ENCODE measurements at regions of chr12 and their contacts with region 1.

Region 1: GRCh38 chr12:1795785-1796514 is 24.4 kb upstream of the LRTM2 start:
- DNase-seq: peak; percentile 93
- H3K4me3 Mint-ChIP-seq: peak overlapping the region; percentile 87
- H3K27ac Mint-ChIP-seq: peak overlapping the region; percentile 89
- H3K4me1 Mint-ChIP-seq: peaks cover 18% of the 10 kb centered on the region
- H3K27me3 Mint-ChIP-seq: no peaks in the 10 kb centered on the region

Region 2: GRCh38 chr12:401235-402028 is 1394.5 kb before region 1 on chr12 and contains the start of gene CCDC77:
- intact Hi-C with region 1: loop called (anchors 5 kb)
- DNase-seq: peak; percentile 93
- H3K4me3 Mint-ChIP-seq: no peak within 1 kb of the TSS
- H3K27ac Mint-ChIP-seq: no peak within 1 kb of the TSS
- H3K4me1 Mint-ChIP-seq: no peaks in the 10 kb centered on the region
- H3K27me3 Mint-ChIP-seq: no peaks in the 10 kb centered on the region
- total RNA-seq, gene CCDC77: 12.6 and 14.6 TPM in 2 replicates

Region 3: DNA sequence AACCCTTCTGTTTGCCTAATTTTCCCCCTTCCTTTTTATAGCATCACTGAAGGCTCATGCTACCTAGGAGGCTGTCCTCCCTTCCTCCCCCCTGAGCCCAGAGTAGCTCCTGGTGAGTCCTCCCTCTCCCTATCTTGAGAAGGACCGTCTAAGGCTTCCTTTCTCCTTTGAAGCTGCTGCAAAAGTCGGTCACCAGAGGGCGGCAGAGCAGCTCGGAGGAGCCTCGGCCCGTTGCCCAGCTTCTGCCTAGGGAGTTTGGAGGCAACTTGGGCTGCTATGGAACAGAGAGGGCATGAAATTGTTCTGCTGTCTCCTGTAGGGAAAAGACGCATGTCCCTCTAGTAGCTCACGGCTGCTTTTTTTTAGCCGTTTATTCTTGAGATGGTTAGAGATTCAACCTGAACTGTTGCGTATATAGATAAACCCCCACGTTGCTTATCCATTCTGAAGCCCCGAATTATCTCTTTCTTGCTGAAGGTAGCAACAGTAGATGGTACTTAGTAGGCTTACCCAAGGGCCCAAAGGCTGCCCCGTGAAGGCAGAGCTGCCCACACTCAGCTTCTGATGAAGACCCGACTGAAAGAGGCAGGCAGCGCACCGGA is 161.3 kb before region 1 on chr12:
- intact Hi-C with region 1: loop called (anchors 1 kb)
- DNase-seq: peak; percentile 30
- H3K4me3 Mint-ChIP-seq: no peak overlapping the region
- H3K27ac Mint-ChIP-seq: no peak overlapping the region
- H3K4me1 Mint-ChIP-seq: peaks cover 8% of the 10 kb centered on the region
- H3K27me3 Mint-ChIP-seq: peaks cover 40% of the 10 kb centered on the region

Region 4: GRCh38 chr12:1939801-1940607 is 144.1 kb after region 1 on chr12:
- intact Hi-C with region 1: loop called (anchors 1 kb)
- DNase-seq: peak; percentile 74
- H3K4me3 Mint-ChIP-seq: no peak overlapping the region
- H3K27ac Mint-ChIP-seq: no peak overlapping the region
- H3K4me1 Mint-ChIP-seq: peaks cover 6% of the 10 kb centered on the region
- H3K27me3 Mint-ChIP-seq: no peaks in the 10 kb centered on the region

Region 5: DNA sequence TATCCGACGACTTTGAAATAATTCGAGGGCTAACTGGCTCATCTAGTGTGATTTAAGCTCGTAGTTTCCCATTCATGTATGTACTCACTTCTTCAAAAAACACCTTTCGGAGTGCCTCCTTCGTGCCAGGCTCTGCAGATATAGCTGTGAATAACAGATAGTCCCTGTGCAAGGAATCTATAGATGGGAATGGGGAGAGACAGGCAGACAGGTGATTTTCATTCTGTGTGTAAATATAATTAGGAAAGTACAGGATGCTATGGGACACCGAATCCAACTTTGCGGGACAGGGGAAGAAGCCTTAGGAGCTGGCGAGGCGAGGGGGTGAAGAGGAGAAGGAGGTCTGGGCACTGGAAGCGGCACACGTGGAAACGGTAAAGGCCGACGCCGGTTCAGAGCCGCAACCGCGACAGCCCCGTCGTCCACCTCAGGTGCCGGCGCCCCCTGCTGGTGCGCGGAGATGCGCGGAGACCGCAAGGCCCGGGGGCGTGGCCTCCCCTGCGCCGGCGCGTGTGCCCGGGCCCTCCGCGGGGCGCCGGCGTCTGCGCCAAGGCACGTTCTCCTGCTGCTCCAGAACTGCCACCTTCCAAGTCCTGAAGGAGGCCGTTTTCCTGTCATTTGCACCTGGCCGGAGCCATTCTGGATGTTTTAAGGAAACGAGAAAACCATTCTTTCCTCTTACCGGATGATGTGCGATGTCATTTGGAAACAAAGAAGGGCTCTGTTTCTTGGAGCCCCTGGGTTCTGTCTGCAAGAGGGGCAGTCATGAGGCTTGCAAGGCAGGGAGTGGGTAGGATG is 238.9 kb after region 1 on chr12:
- intact Hi-C with region 1: loop called (anchors 1 kb)
- DNase-seq: peak; percentile 78
- H3K4me3 Mint-ChIP-seq: peak overlapping the region; percentile 53
- H3K27ac Mint-ChIP-seq: no peak overlapping the region
- H3K4me1 Mint-ChIP-seq: peaks cover 14% of the 10 kb centered on the region
- H3K27me3 Mint-ChIP-seq: peaks cover 52% of the 10 kb centered on the region

Measured in activated T-helper 1 cell treated with anti-CD3 and anti-CD28 coated beads, Interleukin-12 subunit alpha, Interleukin-12 subunit beta, Interleukin-2, Interleukin-4 antibody, amounts not matched to agents 30 ng/mL and 10 ng/mL and 1 ng/mL, durations not matched to agents 14 hours and 24 hours and 36 hours (primary cell).